ENCODE measurements at regions of chr15 and their contacts with region 1.

Region 1: DNA sequence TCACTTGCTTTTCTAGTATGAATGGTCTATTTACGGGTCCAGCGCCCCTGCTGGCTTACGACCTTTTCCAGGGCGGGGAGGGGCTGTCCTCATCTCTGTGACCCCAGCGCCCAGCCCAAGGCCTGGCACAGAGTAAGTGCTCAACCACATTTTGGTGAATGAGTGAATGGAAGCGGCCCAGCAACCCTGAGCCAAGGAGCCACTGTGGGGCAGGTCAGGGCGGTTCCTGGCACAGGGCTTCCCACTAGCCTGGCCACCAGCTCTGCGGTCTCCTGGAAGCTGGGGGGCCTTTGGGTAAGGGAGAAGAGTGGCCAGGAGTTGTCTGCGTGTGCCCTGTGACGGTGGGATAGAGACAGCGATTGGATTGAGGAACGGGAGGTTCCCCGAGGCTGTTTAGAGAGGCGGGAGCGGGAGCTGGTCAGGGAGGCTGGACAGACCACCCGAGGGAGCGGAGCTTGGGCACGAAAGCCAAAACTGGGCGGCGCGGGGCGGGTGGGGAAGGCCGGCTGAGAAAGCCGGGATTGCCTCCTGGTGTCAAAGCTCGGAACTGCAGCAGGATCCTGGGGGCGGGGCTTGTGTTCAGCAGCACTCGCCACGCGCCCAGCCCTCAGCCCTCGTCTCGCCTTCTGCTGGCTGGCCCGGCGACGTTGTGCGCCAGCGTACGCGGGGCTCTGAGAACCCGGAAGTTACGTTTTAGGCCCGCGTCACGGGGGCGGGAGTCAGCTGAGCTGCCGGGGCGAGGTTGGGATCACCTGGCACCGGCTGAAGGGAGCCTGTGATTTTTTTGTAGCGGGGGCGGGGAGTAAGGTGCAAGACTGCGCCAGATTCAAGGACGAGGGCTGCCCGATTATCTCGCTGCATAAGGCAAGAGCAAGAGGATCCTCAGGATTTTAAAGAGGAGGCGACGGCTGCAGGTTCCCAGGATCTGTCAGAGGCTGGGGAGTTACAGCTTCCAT is at the start of gene VPS18:
- DNase-seq: peak; percentile 97 to 98 (median 98)
- H3K4me3 ChIP-seq: peak within 1 kb of the TSS; percentile 53 to 86
- H3K4me3 Mint-ChIP-seq: peak within 1 kb of the TSS; percentile 95 to 100 (median 99)
- H3K27ac ChIP-seq: peak within 1 kb of the TSS; percentile 86
- H3K27ac Mint-ChIP-seq: peak within 1 kb of the TSS; percentile 95 to 99 (median 99)
- H3K4me1 ChIP-seq: peaks cover 21% of the 10 kb centered on the region
- H3K4me1 Mint-ChIP-seq: peaks cover 24 to 52% (median 36%) of the 10 kb centered on the region in 4 donors
- H3K27me3 ChIP-seq: no peaks in the 10 kb centered on the region
- H3K27me3 Mint-ChIP-seq: no peaks in the 10 kb centered on the region
- total RNA-seq, gene VPS18: 18.4 to 20.3 TPM

Region 2: GRCh38 chr15:40516322-40516721 is 377.7 kb before region 1 on chr15:
- CTCF ChIA-PET with region 1: no interaction called
- POLR2A ChIA-PET with region 1: no interaction called
- intact Hi-C with region 1: loop called (anchors 5 kb)
- DNase-seq: no peak
- H3K4me3 ChIP-seq: no peak overlapping the region
- H3K4me3 Mint-ChIP-seq: no peak overlapping the region
- H3K27ac ChIP-seq: no peak overlapping the region
- H3K27ac Mint-ChIP-seq: no peak overlapping the region
- H3K4me1 ChIP-seq: peaks cover 9% of the 10 kb centered on the region
- H3K4me1 Mint-ChIP-seq: peaks cover 6 to 13% (median 8%) of the 10 kb centered on the region in 4 donors
- H3K27me3 ChIP-seq: peaks cover 10% of the 10 kb centered on the region
- H3K27me3 Mint-ChIP-seq: peaks cover 17 to 20% of the 10 kb centered on the region in 2 donors

Region 3: DNA sequence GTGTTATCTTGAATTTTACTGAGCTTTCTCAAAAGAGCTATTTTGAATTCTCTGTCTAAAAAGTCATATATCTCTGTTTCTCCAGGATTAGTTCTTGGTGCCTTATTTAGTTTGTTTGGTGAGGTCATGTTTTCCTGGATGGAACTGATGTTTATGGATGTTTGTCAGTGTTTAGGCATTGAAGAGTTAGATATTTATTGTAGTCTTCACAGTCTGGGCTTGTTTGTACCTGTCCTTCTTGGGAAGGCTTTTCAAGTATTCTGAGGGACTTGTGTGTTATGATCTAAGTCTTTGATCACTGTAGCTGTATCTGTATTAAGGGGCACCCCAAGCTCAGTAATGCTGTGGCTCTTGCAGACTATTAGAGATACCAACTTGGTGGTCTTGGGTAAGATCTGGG is 209.6 kb before region 1 on chr15:
- CTCF ChIA-PET with region 1: interaction called, 4 read pairs
- POLR2A ChIA-PET with region 1: no interaction called
- intact Hi-C with region 1: loop called (anchors 5 kb)
- DNase-seq: no peak
- H3K4me3 ChIP-seq: no peak overlapping the region
- H3K4me3 Mint-ChIP-seq: no peak overlapping the region
- H3K27ac ChIP-seq: no peak overlapping the region
- H3K27ac Mint-ChIP-seq: peak overlapping the region in 2 of 7 donors; percentile 51 to 64
- H3K4me1 ChIP-seq: no peaks in the 10 kb centered on the region
- H3K4me1 Mint-ChIP-seq: no peaks in the 10 kb centered on the region
- H3K27me3 ChIP-seq: no peaks in the 10 kb centered on the region
- H3K27me3 Mint-ChIP-seq: no peaks in the 10 kb centered on the region

Region 4: GRCh38 chr15:40807028-40807887 is 86.8 kb before region 1 on chr15 and contains the starts of genes DNAJC17 and ZFYVE19:
- CTCF ChIA-PET with region 1: no interaction called
- POLR2A ChIA-PET with region 1: interaction called, 14 read pairs
- intact Hi-C with region 1: loop called (anchors 1 kb)
- DNase-seq: peak; percentile 90 to 97 (median 91)
- H3K4me3 ChIP-seq: peak within 1 kb of the TSS; percentile 95 to 100
- H3K4me3 Mint-ChIP-seq: peak within 1 kb of the TSS; percentile 96 to 100 (median 98)
- H3K27ac ChIP-seq: peak within 1 kb of the TSS; percentile 97
- H3K27ac Mint-ChIP-seq: peak within 1 kb of the TSS; percentile 92 to 100 (median 98)
- H3K4me1 ChIP-seq: peaks cover 20% of the 10 kb centered on the region
- H3K4me1 Mint-ChIP-seq: peaks cover 15 to 33% (median 22%) of the 10 kb centered on the region in 4 donors
- H3K27me3 ChIP-seq: no peaks in the 10 kb centered on the region
- H3K27me3 Mint-ChIP-seq: no peaks in the 10 kb centered on the region
- total RNA-seq, gene DNAJC17: 40.5 to 43.9 TPM
- total RNA-seq, gene ZFYVE19: 34.1 to 35.0 TPM

Region 5: GRCh38 chr15:40881351-40881750 is 12.7 kb before region 1 on chr15:
- CTCF ChIA-PET with region 1: interaction called, 11 read pairs
- POLR2A ChIA-PET with region 1: no interaction called
- intact Hi-C with region 1: no loop called
- DNase-seq: no peak
- H3K4me3 ChIP-seq: no peak overlapping the region
- H3K4me3 Mint-ChIP-seq: no peak overlapping the region
- H3K27ac ChIP-seq: no peak overlapping the region
- H3K27ac Mint-ChIP-seq: no peak overlapping the region
- H3K4me1 ChIP-seq: peaks cover 13% of the 10 kb centered on the region
- H3K4me1 Mint-ChIP-seq: peaks cover 7 to 12% (median 10%) of the 10 kb centered on the region in 4 donors
- H3K27me3 ChIP-seq: no peaks in the 10 kb centered on the region
- H3K27me3 Mint-ChIP-seq: no peaks in the 10 kb centered on the region

Region 6: DNA sequence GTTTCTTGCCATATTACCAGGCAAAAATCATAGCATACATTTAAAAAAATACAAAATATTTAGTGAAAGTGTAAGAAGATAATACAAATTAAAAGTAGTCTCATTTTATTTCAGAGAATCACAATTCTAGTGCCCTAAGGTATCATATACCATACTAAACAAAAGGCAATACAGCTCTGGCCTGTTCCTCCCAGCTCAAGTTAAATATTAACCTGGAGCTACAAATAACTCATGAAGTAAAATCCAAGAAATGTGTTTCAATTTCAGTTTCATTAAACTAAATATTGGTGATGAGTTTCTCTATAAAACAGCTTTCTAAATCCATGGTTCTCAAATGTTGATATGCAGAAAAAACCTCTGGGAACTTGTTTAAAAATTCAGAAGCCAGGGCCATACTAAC is 154.4 kb after region 1 on chr15:
- CTCF ChIA-PET with region 1: no interaction called
- POLR2A ChIA-PET with region 1: no interaction called
- intact Hi-C with region 1: no loop called
- DNase-seq: no peak
- H3K4me3 ChIP-seq: no peak overlapping the region
- H3K4me3 Mint-ChIP-seq: no peak overlapping the region
- H3K27ac ChIP-seq: no peak overlapping the region
- H3K27ac Mint-ChIP-seq: peak overlapping the region in 2 of 7 donors; percentile 21 to 41
- H3K4me1 ChIP-seq: no peaks in the 10 kb centered on the region
- H3K4me1 Mint-ChIP-seq: no peaks in the 10 kb centered on the region
- H3K27me3 ChIP-seq: no peaks in the 10 kb centered on the region
- H3K27me3 Mint-ChIP-seq: no peaks in the 10 kb centered on the region

Region 7: GRCh38 chr15:41116116-41116871 is 222.3 kb after region 1 on chr15 and contains the start of gene INO80:
- CTCF ChIA-PET with region 1: interaction called, 5 read pairs
- POLR2A ChIA-PET with region 1: interaction called, 8 read pairs
- intact Hi-C with region 1: loop called (anchors 5 kb)
- DNase-seq: peak; percentile 96 to 97 (median 97)
- H3K4me3 ChIP-seq: peak within 1 kb of the TSS; percentile 95 to 100
- H3K4me3 Mint-ChIP-seq: peak within 1 kb of the TSS; percentile 93 to 99 (median 96)
- H3K27ac ChIP-seq: peak within 1 kb of the TSS; percentile 84
- H3K27ac Mint-ChIP-seq: peak within 1 kb of the TSS; percentile 87 to 100 (median 99)
- H3K4me1 ChIP-seq: peaks cover 31% of the 10 kb centered on the region
- H3K4me1 Mint-ChIP-seq: peaks cover 15 to 36% (median 26%) of the 10 kb centered on the region in 4 donors
- H3K27me3 ChIP-seq: no peaks in the 10 kb centered on the region
- H3K27me3 Mint-ChIP-seq: peaks cover 0 to 2% of the 10 kb centered on the region in 2 donors
- total RNA-seq, gene INO80: 29.7 to 34.4 TPM

Measured in CD4-positive, alpha-beta memory T cell (primary cell).